ENCODE measurements at regions of chr19 and their contacts with region 1.

Region 1: GRCh38 chr19:19224852-19225494 is 13.2 kb downstream of the NCAN start:
- DNase-seq: peak; percentile 84
- ATAC-seq: peak; percentile 95
- H3K4me3 ChIP-seq: peak overlapping the region; percentile 12 to 53 (median 44)
- H3K4me3 Mint-ChIP-seq: peak overlapping the region; percentile 84
- H3K27ac ChIP-seq: no peak overlapping the region
- H3K27ac Mint-ChIP-seq: no peak overlapping the region
- H3K4me1 ChIP-seq: peaks cover 10% of the 10 kb centered on the region in 2 donors
- H3K4me1 Mint-ChIP-seq: peaks cover 6% of the 10 kb centered on the region
- H3K27me3 ChIP-seq: peaks cover 0 to 35% (median 9%) of the 10 kb centered on the region in 4 experiments
- H3K27me3 Mint-ChIP-seq: peaks cover 22% of the 10 kb centered on the region
- CTCF ChIP-seq: peak; percentile 89

Region 2: GRCh38 chr19:19145684-19146608 is 79.0 kb before region 1 on chr19:
- CTCF ChIA-PET with region 1: interaction called, 10 read pairs
- POLR2A ChIA-PET with region 1: no interaction called
- intact Hi-C with region 1: loop called (anchors 1 kb)
- DNase-seq: peak; percentile 86
- ATAC-seq: peak; percentile 96
- H3K4me3 ChIP-seq: no peak overlapping the region
- H3K4me3 Mint-ChIP-seq: no peak overlapping the region
- H3K27ac ChIP-seq: no peak overlapping the region
- H3K27ac Mint-ChIP-seq: no peak overlapping the region
- H3K4me1 ChIP-seq: peaks cover 6 to 12% of the 10 kb centered on the region in 2 donors
- H3K4me1 Mint-ChIP-seq: peaks cover 9% of the 10 kb centered on the region
- H3K27me3 ChIP-seq: no peaks in the 10 kb centered on the region
- H3K27me3 Mint-ChIP-seq: no peaks in the 10 kb centered on the region
- CTCF ChIP-seq: peak; percentile 83

Region 3: GRCh38 chr19:19203012-19203856 is 21.7 kb before region 1 on chr19 and contains the start of gene NR2C2AP:
- CTCF ChIA-PET with region 1: interaction called, 5 read pairs
- POLR2A ChIA-PET with region 1: no interaction called
- intact Hi-C with region 1: loop called (anchors 1 kb)
- DNase-seq: peak; percentile 93
- ATAC-seq: peak; percentile 94
- H3K4me3 ChIP-seq: peak within 1 kb of the TSS; percentile 71 to 91 (median 81)
- H3K4me3 Mint-ChIP-seq: peak within 1 kb of the TSS; percentile 92
- H3K27ac ChIP-seq: peak within 1 kb of the TSS; percentile 57 to 85
- H3K27ac Mint-ChIP-seq: peak within 1 kb of the TSS; percentile 91
- H3K4me1 ChIP-seq: peaks cover 23 to 33% of the 10 kb centered on the region in 2 donors
- H3K4me1 Mint-ChIP-seq: peaks cover 30% of the 10 kb centered on the region
- H3K27me3 ChIP-seq: peaks cover 0 to 11% (median 2%) of the 10 kb centered on the region in 4 experiments
- H3K27me3 Mint-ChIP-seq: peaks cover 9% of the 10 kb centered on the region
- CTCF ChIP-seq: no peak
- total RNA-seq, gene NR2C2AP: 27.1 and 29.3 TPM in 2 replicates

Measured in B cell (primary cell).